HEK293T (cell line): ENCODE measurements at regions of chr1 and their contacts with region 1.

Region 1: DNA sequence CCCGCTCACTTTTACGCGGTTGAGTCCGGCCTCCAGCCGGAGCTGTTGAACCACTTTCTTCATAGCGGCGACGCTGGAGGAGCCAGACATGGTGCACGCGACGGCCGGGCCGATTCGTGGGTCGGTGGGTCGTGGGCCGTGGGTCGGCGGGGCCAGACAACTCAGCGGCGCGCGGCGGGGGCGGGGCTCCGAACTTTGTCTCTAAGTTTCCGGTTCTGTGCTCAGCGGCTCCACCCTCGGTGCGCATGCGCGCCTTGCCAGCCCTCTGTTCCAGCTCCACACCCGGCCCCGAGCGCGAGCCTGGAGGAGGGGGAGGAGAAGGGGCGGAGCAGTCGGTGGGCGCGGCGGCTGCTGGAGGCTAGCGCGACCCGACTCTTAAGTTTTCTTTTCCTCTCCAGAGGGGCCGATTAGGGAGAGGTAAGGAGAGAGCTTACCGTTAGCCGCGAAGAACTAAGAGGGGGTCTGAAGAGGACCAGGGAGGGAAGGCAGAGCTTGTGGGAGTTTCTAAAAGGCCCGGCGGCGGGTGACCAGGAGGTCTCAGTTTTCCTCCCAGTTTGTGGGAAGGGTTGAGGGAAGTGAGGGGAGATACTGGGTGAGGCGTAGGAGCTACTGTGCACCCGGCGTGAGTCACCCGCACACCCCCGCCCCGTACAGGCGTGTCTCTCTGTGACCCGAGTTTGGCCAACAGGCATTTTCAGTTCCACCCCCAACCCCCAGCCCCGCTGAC is at the starts of genes GNG5 and SPATA1:
- DNase-seq: peak; percentile 99

Region 2: DNA sequence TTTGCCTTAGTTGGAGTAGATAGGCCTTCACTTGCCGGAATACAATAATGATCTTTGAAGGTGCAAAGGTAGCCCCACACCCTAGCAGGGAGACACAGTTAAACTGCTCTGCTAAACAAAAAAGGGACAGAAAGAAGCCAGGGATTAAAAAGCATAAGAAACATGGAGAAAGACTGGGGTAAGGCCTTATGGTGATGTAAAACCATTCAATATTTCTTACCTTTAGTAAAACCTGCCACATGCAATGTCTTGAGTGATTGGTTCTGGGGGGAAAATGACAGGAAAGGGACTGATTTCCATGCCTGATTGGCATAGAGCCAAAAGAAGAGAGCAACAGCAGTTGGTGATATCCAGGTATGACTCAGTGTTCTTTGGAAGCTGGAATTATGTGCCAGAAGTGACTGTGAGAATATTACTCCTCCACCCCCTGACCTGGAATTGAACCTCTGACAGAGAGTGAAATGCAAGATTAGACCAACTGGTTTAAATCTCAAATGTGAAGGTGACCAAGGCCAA is 99.8 kb before region 1 on chr1:
- CTCF ChIA-PET with region 1: no interaction called
- POLR2A ChIA-PET with region 1: no interaction called
- DNase-seq: no peak

Region 3: DNA sequence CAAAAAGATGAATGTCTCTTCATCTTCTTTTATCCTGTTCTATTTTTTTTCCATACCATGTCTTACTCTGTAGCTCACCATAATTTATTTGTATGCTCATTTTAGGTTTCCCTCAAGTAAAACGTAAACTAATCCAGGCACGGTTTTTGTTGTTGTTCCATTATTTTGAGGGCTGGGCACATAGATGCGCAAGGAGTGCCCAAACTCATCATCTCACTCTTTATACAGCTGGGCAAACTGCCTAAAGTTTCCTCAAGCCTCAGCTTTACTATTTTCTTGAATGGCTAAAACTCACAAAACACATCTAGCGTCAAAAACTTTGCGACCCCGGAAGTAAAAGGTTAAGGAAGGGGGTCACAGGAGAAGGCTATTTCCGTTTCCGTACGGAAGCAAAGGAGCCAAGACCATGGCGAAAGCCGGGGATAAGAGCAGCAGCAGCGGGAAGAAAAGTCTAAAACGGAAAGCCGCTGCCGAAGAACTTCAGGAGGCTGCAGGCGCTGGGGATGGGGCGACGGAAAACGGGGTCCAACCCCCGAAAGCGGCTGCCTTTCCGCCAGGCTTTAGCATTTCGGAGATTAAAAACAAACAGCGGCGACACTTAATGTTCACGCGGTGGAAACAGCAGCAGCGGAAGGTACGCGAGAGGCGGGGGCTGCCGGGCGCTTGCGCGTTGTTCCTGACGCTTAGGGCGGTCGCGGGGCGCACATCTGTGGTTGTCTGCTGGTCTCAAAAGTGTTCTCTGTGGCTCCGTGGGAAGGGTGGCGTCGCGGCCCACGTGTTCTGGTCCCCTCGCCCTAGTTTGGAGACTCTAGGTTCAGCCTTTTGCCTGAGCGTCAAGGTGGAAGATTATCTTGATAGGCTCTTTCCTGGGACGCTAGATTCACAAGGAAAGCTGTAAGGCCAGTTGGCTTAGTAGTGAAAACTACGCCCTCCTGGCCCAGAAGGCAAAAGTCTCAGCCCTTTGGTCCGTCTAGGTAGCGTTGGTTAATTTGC is 27.0 kb before region 1 on chr1 and contains the start of gene RPF1:
- CTCF ChIA-PET with region 1: no interaction called
- POLR2A ChIA-PET with region 1: interaction called, 15 read pairs
- DNase-seq: peak; percentile 88

Region 4: GRCh38 chr1:84573967-84574842 is 68.0 kb after region 1 on chr1 and contains the start of gene CTBS:
- CTCF ChIA-PET with region 1: no interaction called
- POLR2A ChIA-PET with region 1: interaction called, 11 read pairs
- DNase-seq: peak; percentile 98

Region 5: DNA sequence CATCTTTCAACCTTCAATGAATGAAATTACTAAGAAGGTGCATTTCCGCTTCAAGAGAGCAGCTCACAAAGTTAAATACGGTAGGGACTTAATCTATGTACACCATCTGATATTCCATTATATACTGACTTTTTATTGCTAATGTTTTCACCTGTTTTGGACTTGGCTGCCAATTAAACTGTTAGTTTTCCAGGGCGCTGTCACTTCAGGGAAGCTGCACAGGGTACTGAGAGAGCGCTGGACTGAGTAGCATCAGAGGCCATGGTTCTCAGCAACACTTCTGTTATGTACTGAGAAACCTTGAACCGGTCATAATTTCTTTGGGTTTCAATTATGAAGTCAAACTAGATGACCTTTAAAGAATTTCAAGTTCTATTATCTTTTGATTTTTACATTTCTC is 175.9 kb after region 1 on chr1:
- CTCF ChIA-PET with region 1: no interaction called
- POLR2A ChIA-PET with region 1: no interaction called
- DNase-seq: no peak